ENCODE measurements at regions of chr3 and their contacts with region 1.

Region 1: DNA sequence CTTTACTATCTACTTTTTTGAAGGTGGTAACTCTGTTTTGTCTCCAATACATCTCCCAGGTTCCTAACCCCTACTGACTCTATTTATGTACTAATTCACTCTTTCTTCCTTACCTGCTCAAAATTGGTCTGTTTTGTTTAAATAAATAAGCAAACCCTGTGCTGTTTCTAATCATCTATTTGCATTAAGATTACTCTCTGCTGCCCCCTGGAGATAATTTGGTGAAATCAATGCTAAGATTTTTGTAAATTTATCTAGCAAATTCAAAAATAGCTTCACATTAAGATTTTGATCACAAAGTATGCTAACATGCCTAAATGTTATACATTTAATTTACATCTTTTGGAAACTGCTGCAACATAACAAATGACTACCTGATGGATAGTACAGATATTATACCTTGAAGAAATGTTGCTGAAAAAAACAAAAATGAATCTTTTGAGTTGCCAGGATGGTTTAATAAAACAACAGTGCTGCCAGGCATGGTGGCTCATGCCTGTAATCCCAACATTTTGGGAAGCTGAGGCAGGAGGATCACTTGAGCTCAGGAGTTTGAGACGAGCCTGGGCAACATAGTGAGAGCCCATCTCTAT is 4.4 kb upstream of the CD200R1 start:
- DNase-seq: peak; percentile 71
- ATAC-seq: peak; percentile 35
- H3K4me3 ChIP-seq: no peak overlapping the region
- H3K4me3 Mint-ChIP-seq: no peak overlapping the region
- H3K27ac ChIP-seq: no peak overlapping the region
- H3K27ac Mint-ChIP-seq: no peak overlapping the region
- H3K4me1 ChIP-seq: peaks cover 41 to 49% of the 10 kb centered on the region in 2 donors
- H3K4me1 Mint-ChIP-seq: peaks cover 61% of the 10 kb centered on the region
- H3K27me3 ChIP-seq: no peaks in the 10 kb centered on the region
- H3K27me3 Mint-ChIP-seq: no peaks in the 10 kb centered on the region
- CTCF ChIP-seq: peak; percentile 94

Region 2: DNA sequence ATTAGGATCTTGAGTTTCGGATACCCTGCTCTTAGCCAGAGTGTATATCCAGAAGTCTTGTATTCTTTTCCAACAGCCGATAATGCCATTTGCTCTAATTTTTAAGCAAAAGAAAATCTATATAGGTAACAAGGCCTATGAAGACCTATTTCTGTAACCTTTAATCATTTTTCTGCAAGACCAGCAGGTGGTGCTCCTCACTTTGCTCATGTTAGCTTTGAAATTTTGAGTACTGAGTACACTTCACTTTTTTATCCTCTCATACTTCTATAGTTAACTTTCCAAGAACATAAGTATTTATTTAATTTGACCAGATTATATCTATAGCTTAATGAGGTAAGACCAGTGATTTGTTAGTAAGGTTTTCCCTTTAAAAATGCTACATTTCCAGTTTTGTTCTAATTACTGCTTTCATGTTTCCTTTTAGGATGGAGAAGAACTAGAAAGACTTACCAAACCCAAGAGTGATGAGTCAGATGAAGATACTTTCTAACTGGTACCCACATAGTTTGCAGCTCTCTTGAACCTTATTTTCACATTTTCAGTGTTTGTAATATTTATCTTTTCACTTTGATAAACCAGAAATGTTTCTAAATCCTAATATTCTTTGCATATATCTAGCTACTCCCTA is 397.0 kb before region 1 on chr3:
- CTCF ChIA-PET with region 1: interaction called, 15 read pairs
- POLR2A ChIA-PET with region 1: no interaction called
- intact Hi-C with region 1: loop called (anchors 2 kb)
- DNase-seq: peak; percentile 43
- ATAC-seq: no peak
- H3K4me3 ChIP-seq: no peak overlapping the region
- H3K4me3 Mint-ChIP-seq: no peak overlapping the region
- H3K27ac ChIP-seq: no peak overlapping the region
- H3K27ac Mint-ChIP-seq: no peak overlapping the region
- H3K4me1 ChIP-seq: peaks cover 28 to 32% of the 10 kb centered on the region in 2 donors
- H3K4me1 Mint-ChIP-seq: peaks cover 31% of the 10 kb centered on the region
- H3K27me3 ChIP-seq: no peaks in the 10 kb centered on the region
- H3K27me3 Mint-ChIP-seq: no peaks in the 10 kb centered on the region
- CTCF ChIP-seq: peak; percentile 76

Region 3: GRCh38 chr3:112751564-112752512 is 227.5 kb before region 1 on chr3:
- CTCF ChIA-PET with region 1: interaction called, 27 read pairs
- POLR2A ChIA-PET with region 1: no interaction called
- intact Hi-C with region 1: no loop called
- DNase-seq: no peak
- ATAC-seq: no peak
- H3K4me3 ChIP-seq: no peak overlapping the region
- H3K4me3 Mint-ChIP-seq: no peak overlapping the region
- H3K27ac ChIP-seq: no peak overlapping the region
- H3K27ac Mint-ChIP-seq: no peak overlapping the region
- H3K4me1 ChIP-seq: peaks cover 0 to 7% of the 10 kb centered on the region in 2 donors
- H3K4me1 Mint-ChIP-seq: peaks cover 8% of the 10 kb centered on the region
- H3K27me3 ChIP-seq: no peaks in the 10 kb centered on the region
- H3K27me3 Mint-ChIP-seq: no peaks in the 10 kb centered on the region
- CTCF ChIP-seq: no peak

Region 4: GRCh38 chr3:112858410-112859069 is 120.8 kb before region 1 on chr3:
- CTCF ChIA-PET with region 1: interaction called, 4 read pairs
- POLR2A ChIA-PET with region 1: no interaction called
- intact Hi-C with region 1: loop called (anchors 5 kb)
- DNase-seq: peak; percentile 50
- ATAC-seq: peak; percentile 65
- H3K4me3 ChIP-seq: no peak overlapping the region
- H3K4me3 Mint-ChIP-seq: peak overlapping the region; percentile 66
- H3K27ac ChIP-seq: no peak overlapping the region
- H3K27ac Mint-ChIP-seq: peak overlapping the region; percentile 69
- H3K4me1 ChIP-seq: peaks cover 25 to 32% of the 10 kb centered on the region in 2 donors
- H3K4me1 Mint-ChIP-seq: peaks cover 37% of the 10 kb centered on the region
- H3K27me3 ChIP-seq: no peaks in the 10 kb centered on the region
- H3K27me3 Mint-ChIP-seq: no peaks in the 10 kb centered on the region
- CTCF ChIP-seq: no peak

Region 5: DNA sequence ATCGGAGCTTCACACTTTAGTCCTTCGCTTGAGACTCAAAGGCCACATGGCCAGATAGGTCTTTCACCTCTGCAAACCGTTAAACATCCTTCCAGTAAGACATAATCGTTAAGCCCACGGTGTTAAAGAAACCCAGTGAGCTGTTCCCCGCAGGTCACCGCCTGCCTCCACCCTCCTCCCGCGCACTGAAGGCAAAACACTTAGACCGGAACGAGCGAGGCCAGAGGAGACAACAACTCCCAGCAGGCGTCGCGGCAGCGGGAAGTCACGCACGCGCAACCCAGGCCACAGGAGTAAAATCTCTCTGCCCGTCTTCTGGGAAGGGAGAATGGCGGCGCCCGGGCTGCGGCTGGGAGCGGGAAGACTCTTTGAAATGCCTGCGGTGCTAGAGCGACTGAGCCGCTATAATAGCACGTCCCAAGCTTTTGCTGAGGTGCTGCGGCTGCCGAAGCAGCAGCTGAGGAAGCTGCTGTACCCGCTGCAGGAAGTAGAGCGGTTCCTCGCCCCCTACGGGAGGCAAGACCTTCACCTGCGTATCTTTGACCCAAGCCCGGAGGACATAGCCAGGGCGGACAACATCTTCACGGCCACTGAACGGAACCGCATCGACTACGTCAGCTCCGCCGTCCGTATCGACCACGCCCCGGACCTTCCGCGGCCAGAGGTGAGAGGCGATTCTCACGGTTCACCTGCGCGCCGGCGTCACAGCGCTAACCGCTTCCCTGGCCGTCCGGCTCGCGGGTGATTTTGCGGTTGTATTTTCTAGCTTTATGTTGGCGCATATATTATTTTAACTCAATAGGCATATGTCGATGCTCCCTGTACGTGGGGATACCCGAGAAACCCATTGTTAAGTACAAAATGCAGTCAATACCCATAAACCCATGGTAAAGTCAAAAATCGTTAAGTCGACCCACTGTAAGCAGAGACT is 11.6 kb after region 1 on chr3 and contains the start of gene GTPBP8:
- CTCF ChIA-PET with region 1: interaction called, 33 read pairs
- POLR2A ChIA-PET with region 1: no interaction called
- intact Hi-C with region 1: no loop called
- DNase-seq: peak; percentile 92
- ATAC-seq: peak; percentile 84
- H3K4me3 ChIP-seq: peak within 1 kb of the TSS; percentile 63 to 89 (median 76)
- H3K4me3 Mint-ChIP-seq: peak within 1 kb of the TSS; percentile 95
- H3K27ac ChIP-seq: peak within 1 kb of the TSS; percentile 82 to 98
- H3K27ac Mint-ChIP-seq: peak within 1 kb of the TSS; percentile 98
- H3K4me1 ChIP-seq: peaks cover 11 to 12% of the 10 kb centered on the region in 2 donors
- H3K4me1 Mint-ChIP-seq: peaks cover 30% of the 10 kb centered on the region
- H3K27me3 ChIP-seq: no peaks in the 10 kb centered on the region
- H3K27me3 Mint-ChIP-seq: no peaks in the 10 kb centered on the region
- CTCF ChIP-seq: no peak
- total RNA-seq, gene GTPBP8: 23.4 and 23.5 TPM in 2 replicates

Region 6: GRCh38 chr3:113097960-113098447 is 118.7 kb after region 1 on chr3:
- CTCF ChIA-PET with region 1: no interaction called
- POLR2A ChIA-PET with region 1: no interaction called
- intact Hi-C with region 1: no loop called
- DNase-seq: no peak
- ATAC-seq: no peak
- H3K4me3 ChIP-seq: no peak overlapping the region
- H3K4me3 Mint-ChIP-seq: no peak overlapping the region
- H3K27ac ChIP-seq: no peak overlapping the region
- H3K27ac Mint-ChIP-seq: no peak overlapping the region
- H3K4me1 ChIP-seq: no peaks in the 10 kb centered on the region
- H3K4me1 Mint-ChIP-seq: no peaks in the 10 kb centered on the region
- H3K27me3 ChIP-seq: no peaks in the 10 kb centered on the region
- H3K27me3 Mint-ChIP-seq: no peaks in the 10 kb centered on the region
- CTCF ChIP-seq: no peak

Region 7: DNA sequence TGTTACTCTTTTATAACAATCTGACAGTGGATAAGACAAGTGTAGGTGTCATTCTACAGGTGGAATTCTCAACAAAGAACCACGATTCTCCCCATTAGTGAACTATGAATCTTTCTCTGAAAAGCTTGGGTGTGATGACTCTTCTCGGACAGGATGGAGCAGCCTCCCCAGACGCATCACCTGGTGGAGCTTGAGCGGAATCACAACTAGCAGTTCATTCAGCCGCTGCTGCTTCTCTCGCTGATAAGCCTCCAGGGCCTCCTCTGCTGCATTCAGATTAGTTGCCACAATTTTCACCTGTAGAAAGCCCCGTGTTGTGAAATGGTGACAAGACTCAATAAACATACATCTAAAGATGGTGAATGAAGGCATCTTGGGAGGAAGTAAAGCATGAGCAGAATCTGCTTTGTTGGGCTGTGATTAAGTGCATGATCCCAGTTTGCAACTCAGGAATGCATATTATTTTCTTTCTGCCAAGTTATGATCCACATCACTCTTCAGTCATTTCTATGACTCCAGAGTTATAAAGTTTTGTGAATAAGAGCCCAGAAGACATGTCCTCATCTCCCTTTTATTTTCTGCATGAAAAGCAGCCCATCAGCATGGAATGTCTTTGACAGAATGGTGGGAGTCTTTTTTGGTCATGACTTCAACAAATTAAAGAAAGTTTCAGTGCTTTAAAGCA is 325.7 kb after region 1 on chr3:
- CTCF ChIA-PET with region 1: no interaction called
- POLR2A ChIA-PET with region 1: no interaction called
- intact Hi-C with region 1: no loop called
- DNase-seq: no peak
- ATAC-seq: no peak
- H3K4me3 ChIP-seq: no peak overlapping the region
- H3K4me3 Mint-ChIP-seq: no peak overlapping the region
- H3K27ac ChIP-seq: no peak overlapping the region
- H3K27ac Mint-ChIP-seq: no peak overlapping the region
- H3K4me1 ChIP-seq: no peaks in the 10 kb centered on the region
- H3K4me1 Mint-ChIP-seq: no peaks in the 10 kb centered on the region
- H3K27me3 ChIP-seq: no peaks in the 10 kb centered on the region
- H3K27me3 Mint-ChIP-seq: no peaks in the 10 kb centered on the region
- CTCF ChIP-seq: no peak

Region 8: GRCh38 chr3:113552851-113553250 is 573.5 kb after region 1 on chr3:
- CTCF ChIA-PET with region 1: no interaction called
- POLR2A ChIA-PET with region 1: no interaction called
- intact Hi-C with region 1: no loop called
- DNase-seq: peak; percentile 68
- ATAC-seq: peak; percentile 62
- H3K4me3 ChIP-seq: no peak overlapping the region
- H3K4me3 Mint-ChIP-seq: no peak overlapping the region
- H3K27ac ChIP-seq: peak overlapping the region in 1 of 2 donors; percentile 42
- H3K27ac Mint-ChIP-seq: peak overlapping the region; percentile 22
- H3K4me1 ChIP-seq: peaks cover 4 to 6% of the 10 kb centered on the region in 2 donors
- H3K4me1 Mint-ChIP-seq: peaks cover 21% of the 10 kb centered on the region
- H3K27me3 ChIP-seq: no peaks in the 10 kb centered on the region
- H3K27me3 Mint-ChIP-seq: no peaks in the 10 kb centered on the region
- CTCF ChIP-seq: peak; percentile 64

Measured in B cell (primary cell).